Mucosa of descending colon (tissue), 3 donors: ENCODE measurements at regions of chr6 and their contacts with region 1.

Region 1: DNA sequence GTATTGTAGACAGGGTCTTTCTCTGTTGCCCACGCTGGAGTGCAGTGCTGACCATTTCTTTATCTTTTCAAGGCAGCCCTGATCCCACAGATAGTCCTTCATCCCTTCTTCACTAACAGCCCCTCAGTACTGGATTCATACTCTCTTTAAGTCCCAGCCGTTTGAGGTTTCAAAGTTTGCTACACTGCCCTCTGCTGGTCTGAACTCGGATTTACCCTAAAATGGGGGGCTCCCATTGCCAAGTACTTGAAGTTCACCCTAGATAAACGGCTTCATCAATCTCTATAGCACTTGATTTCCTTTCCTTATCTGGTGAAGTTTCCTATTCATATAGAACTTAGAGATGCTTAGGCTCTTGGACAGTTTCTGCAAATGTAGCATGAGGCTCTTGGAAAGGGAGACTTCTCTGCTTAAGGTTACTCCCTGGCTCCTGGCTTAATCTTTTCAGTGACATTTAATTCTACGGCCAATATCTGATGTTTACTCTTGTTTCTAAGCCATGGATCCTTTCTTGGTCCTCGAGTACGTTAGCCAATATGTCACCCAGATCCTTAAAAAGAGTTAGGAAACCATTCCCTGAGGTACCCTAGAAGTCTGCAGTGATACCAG is 21.4 kb upstream of the PREP start:
- DNase-seq: peak in 2 of 3 donors; percentile 38 to 74
- ATAC-seq: peak; percentile 66
- H3K4me3 ChIP-seq: no peak overlapping the region
- H3K4me1 ChIP-seq: no peaks in the 10 kb centered on the region
- CTCF ChIP-seq: peak; percentile 37

Region 2: DNA sequence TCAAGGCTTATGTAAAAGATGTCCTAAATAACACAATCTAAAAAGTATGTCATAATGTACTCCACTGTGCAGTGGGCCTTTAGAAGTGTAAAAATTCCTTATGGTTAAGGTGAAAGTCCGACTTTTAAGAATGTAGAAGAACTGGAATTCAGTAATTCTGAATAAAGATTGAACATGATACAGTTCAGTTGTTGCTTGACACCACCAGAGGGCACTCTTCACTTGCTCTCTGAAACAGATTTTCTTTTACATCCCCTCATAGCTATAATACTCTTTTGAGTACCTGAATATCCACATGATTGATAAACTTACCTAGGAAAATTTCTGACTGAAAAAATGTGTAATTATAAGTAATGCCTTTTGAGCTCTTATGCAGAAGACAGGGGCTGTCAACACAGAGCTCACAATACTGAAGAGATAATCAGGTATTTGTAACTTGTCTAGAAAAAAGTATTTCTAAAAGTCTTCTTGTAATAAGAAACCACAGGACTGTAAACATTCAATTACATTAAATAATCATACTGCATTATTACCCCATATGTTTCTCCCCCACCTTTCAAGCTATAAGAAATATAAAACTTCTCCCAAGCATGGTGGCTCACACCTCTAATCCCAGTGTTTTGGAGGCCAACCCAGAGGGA is 336.6 kb before region 1 on chr6:
- intact Hi-C with region 1: loop called in 1 of 2 experiments (anchors 5 kb)
- DNase-seq: peak in 1 of 3 donors; percentile 69
- ATAC-seq: peak; percentile 67
- H3K4me3 ChIP-seq: peak overlapping the region; percentile 9
- H3K4me1 ChIP-seq: no peaks in the 10 kb centered on the region
- CTCF ChIP-seq: peak; percentile 60